Gastrocnemius medialis (tissue), 4 donors: ENCODE measurements at regions of chr2 and their contacts with region 1.

Region 1: GRCh38 chr2:227188292-227188691 is 23.9 kb downstream of the COL4A3 start:
- DNase-seq: peak; percentile 69
- ATAC-seq: peak; percentile 87 to 92
- H3K4me3 ChIP-seq: peak overlapping the region in 2 of 4 donors; percentile 1 to 10
- H3K27ac ChIP-seq: peak overlapping the region; percentile 79 to 91 (median 84)
- H3K4me1 ChIP-seq: peaks cover 65 to 93% of the 10 kb centered on the region in 2 donors
- H3K27me3 ChIP-seq: no peaks in the 10 kb centered on the region
- CTCF ChIP-seq: no peak
- POLR2A ChIP-seq: no peak

Region 2: DNA sequence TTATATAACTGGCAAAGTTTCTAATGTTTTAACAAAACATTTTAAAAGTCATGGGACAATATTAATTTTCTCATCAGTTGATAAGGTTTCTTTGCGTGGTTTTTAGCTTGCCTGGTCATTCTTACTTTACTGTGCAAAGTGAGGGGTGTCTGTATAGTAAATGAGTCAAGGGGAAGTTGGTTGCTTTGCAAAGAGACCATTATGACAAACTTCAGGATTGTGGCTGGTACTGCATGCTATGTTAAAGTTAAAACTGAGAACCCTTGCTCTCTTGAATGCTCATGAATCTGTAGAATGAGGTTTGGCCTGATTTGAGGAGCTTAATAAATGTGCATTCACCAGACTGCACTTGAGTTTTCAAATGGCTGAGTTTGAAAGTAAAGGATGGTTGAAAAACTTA is 71.3 kb before region 1 on chr2:
- in situ Hi-C with region 1: no loop called
- intact Hi-C with region 1: no loop called
- DNase-seq: no peak
- ATAC-seq: no peak
- H3K4me3 ChIP-seq: no peak overlapping the region
- H3K27ac ChIP-seq: no peak overlapping the region
- H3K4me1 ChIP-seq: no peaks in the 10 kb centered on the region
- H3K27me3 ChIP-seq: no peaks in the 10 kb centered on the region
- CTCF ChIP-seq: no peak
- POLR2A ChIP-seq: no peak

Region 3: DNA sequence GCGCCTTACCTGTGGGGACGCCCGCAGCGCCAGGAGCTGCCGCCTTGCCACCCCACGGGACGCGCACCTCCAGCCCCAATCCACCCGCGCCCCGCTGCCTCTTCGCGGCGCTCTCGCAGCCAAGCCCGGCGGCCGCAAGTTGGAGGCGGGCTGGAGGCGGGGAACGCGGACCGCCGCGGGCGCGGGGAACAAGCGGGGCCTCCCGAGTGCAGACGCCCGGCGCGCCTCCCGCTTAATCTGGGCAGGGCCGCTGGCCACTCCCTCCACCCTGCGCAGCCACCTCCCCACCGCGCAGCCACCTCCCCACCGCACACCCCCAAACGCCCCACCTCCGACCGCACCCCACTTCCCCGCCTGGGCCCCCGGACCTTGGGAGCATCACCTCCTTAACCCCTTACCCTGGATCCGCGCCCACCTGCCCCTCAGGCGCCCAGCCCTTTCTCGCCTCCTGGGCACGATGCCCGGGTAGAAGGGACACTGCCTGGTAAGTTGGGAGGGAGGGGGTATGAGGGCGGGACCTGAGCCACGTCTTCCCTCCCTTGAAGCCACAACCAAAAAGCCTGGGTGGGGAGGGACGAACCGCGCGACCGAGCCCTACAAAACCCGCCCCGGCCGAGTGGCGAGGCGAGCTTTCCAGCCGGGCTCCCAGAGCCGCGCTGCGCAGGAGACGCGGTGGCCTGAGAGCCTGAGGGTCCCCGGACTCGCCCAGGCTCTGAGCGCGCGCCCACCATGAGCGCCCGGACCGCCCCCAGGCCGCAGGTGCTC is 24.1 kb before region 1 on chr2 and contains the starts of genes COL4A3 and COL4A4:
- in situ Hi-C with region 1: no loop called
- intact Hi-C with region 1: loop called (anchors 2 kb)
- DNase-seq: peak; percentile 72 to 76
- ATAC-seq: peak; percentile 81 to 84
- H3K4me3 ChIP-seq: peak within 1 kb of the TSS; percentile 70 to 81 (median 72)
- H3K27ac ChIP-seq: peak within 1 kb of the TSS; percentile 86 to 99 (median 93)
- H3K4me1 ChIP-seq: peaks cover 33 to 65% of the 10 kb centered on the region in 2 donors
- H3K27me3 ChIP-seq: no peaks in the 10 kb centered on the region
- CTCF ChIP-seq: no peak
- POLR2A ChIP-seq: peak; percentile 42 to 72
- total RNA-seq, gene COL4A3: 1.9 to 66.8 (median 3.8) TPM
- total RNA-seq, gene COL4A4: 2.0 to 11.4 (median 5.7) TPM

Region 4: GRCh38 chr2:227228061-227228667 is 39.9 kb after region 1 on chr2:
- in situ Hi-C with region 1: no loop called
- intact Hi-C with region 1: loop called (anchors 1 kb)
- DNase-seq: peak; percentile 96 to 98
- ATAC-seq: peak; percentile 93 to 97
- H3K4me3 ChIP-seq: peak overlapping the region in 1 of 4 donors; percentile 9
- H3K27ac ChIP-seq: peak overlapping the region; percentile 80 to 91 (median 86)
- H3K4me1 ChIP-seq: peaks cover 11 to 15% of the 10 kb centered on the region in 2 donors
- H3K27me3 ChIP-seq: no peaks in the 10 kb centered on the region
- CTCF ChIP-seq: no peak
- POLR2A ChIP-seq: peak in 1 of 2 donors; percentile 32